PC-3 (cell line): ENCODE measurements at regions of chr14 and their contacts with region 1.

Region 1: GRCh38 chr14:72708708-72709476 is 185.0 kb downstream of the DPF3 start:
- DNase-seq: peak; percentile 91
- ATAC-seq: peak; percentile 98
- H3K4me3 ChIP-seq: no peak overlapping the region
- H3K27ac ChIP-seq: no peak overlapping the region
- H3K4me1 ChIP-seq: peaks cover 12% of the 10 kb centered on the region
- H3K27me3 ChIP-seq: no peaks in the 10 kb centered on the region
- CTCF ChIP-seq: 0 out of 2 replicates have a peak, but pooled peaks have one; percentile 17

Region 2: GRCh38 chr14:72643317-72643801 is 65.5 kb before region 1 on chr14:
- CTCF ChIA-PET with region 1: no interaction called
- POLR2A ChIA-PET with region 1: no interaction called
- intact Hi-C with region 1: loop called (anchors 2 kb)
- DNase-seq: peak; percentile 98
- ATAC-seq: peak; percentile 99
- H3K4me3 ChIP-seq: no peak overlapping the region
- H3K27ac ChIP-seq: peak overlapping the region; percentile 76
- H3K4me1 ChIP-seq: peaks cover 55% of the 10 kb centered on the region
- H3K27me3 ChIP-seq: no peaks in the 10 kb centered on the region
- CTCF ChIP-seq: no peak; the same call in 1 of the 2 replicates